Ovary (tissue), 10 donors: ENCODE measurements at regions of chr7 and their contacts with region 1.

Region 1: DNA sequence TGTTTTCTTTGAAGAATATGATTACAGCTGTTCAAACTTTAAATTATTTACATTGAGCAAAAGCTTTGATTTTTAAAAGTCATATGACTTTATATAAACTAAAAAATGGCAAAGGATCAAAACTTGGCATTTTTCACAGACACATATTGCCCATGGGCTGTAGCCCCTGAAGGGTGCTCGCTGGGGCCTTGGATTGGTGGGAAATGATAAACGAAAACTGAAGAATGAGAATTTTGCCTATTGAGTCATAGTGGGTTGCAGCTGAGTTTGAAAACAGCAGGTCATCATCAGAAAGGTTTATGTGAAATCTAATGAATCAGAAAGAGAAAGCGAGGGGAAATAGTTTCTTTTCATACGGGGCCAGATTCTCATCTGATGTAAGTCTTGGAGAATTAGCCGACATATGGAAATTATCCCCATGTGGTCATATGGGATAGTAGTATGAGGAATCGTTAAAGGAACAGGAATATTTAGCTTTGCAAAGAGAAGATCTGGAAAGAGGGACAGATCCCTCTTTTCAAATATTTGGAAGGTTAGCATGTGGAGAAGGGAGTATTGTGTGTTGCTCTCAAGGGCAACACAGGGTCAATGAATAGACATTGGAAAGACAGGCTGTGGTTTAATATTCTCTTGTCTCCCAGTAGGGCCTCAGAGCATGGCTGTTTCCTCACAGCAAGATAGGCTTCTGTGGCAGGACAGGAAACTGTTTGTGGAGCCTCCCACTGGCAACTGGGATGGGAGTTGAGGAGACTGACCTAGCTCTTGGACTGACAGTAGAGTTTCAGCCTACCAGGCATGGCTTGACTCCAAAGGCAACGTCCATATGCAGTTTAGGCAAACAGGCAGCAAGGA is 119.0 kb downstream of the FZD1 start:
- DNase-seq: no peak
- H3K4me3 ChIP-seq: no peak overlapping the region
- H3K27ac ChIP-seq: no peak overlapping the region
- H3K4me1 ChIP-seq: no peaks in the 10 kb centered on the region
- H3K27me3 ChIP-seq: no peaks in the 10 kb centered on the region
- CTCF ChIP-seq: no peak
- EP300 ChIP-seq: no peak
- POLR2A ChIP-seq: no peak

Region 2: GRCh38 chr7:91098566-91098965 is 284.7 kb before region 1 on chr7:
- intact Hi-C with region 1: loop called in 1 of 4 experiments (anchors 10 kb)
- DNase-seq: no peak
- H3K4me3 ChIP-seq: no peak overlapping the region
- H3K27ac ChIP-seq: no peak overlapping the region
- H3K4me1 ChIP-seq: peaks cover 7% of the 10 kb centered on the region
- H3K27me3 ChIP-seq: no peaks in the 10 kb centered on the region
- CTCF ChIP-seq: no peak
- EP300 ChIP-seq: no peak
- POLR2A ChIP-seq: no peak

Region 3: DNA sequence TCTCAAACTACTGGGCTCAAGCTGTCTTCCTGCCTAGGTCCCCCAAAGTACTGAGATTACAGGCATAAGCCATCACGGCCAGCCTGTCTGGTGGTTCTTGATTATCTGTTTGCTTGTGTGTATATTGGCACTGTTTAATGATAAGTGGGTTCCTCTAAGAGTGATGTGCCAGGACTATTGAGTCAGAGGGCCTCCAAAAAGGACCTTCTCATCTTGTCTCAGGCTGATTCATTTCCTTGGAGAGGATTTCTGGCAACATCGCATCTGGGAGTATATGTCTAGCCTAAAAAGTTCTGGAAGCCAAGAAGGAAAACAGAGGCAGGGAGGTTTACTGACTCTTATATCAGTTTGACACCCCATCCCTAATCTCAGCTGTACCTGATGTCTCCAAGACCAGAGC is 530.3 kb after region 1 on chr7:
- intact Hi-C with region 1: no loop called
- DNase-seq: no peak
- H3K4me3 ChIP-seq: no peak overlapping the region
- H3K27ac ChIP-seq: no peak overlapping the region
- H3K4me1 ChIP-seq: no peaks in the 10 kb centered on the region
- H3K27me3 ChIP-seq: no peaks in the 10 kb centered on the region
- CTCF ChIP-seq: no peak
- EP300 ChIP-seq: no peak
- POLR2A ChIP-seq: no peak